H1 (cell line): ENCODE measurements at regions of chr15 and their contacts with region 1.

Region 1: DNA sequence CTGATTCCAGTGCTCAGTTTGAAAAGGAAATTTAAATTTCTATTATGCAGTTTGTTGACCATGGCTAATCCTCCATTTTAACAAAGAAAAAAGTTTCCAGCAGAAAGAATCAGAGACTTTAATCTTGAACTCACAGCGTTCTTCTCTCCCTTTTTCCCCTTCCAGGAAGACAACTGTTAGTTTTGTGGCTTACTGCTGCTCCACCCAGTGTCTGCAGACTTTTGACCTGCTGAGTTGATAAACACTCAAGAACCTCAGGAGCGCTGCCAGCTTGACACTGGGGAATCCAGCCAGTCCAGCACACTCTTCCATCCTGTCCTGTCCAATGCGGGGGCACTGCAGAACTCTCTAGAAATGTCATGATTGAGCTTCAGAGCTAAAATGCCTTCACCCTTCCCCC is 134.6 kb downstream of the LRRC28 start:
- DNase-seq: no peak
- H3K4me3 ChIP-seq: no peak overlapping the region
- H3K27ac ChIP-seq: no peak overlapping the region
- H3K4me1 ChIP-seq: peaks cover 0 to 3% (median under 1%) of the 10 kb centered on the region in 4 experiments; a peak in 4 of 7 replicates
- H3K27me3 ChIP-seq: no peaks in the 10 kb centered on the region
- CTCF ChIP-seq: no peak
- EP300 ChIP-seq: no peak
- POLR2A ChIP-seq: no peak
- RAD21 ChIP-seq: no peak

Region 2: GRCh38 chr15:99343881-99344551 is 41.8 kb before region 1 on chr15:
- CTCF ChIA-PET with region 1: interaction called, 11 read pairs
- POLR2A ChIA-PET with region 1: no interaction called
- DNase-seq: peak; percentile 21 to 65
- H3K4me3 ChIP-seq: no peak overlapping the region
- H3K27ac ChIP-seq: no peak overlapping the region
- H3K4me1 ChIP-seq: no peaks in the 10 kb centered on the region
- H3K27me3 ChIP-seq: no peaks in the 10 kb centered on the region
- CTCF ChIP-seq: peak; percentile 72 to 91 (median 91)
- EP300 ChIP-seq: no peak
- POLR2A ChIP-seq: no peak
- RAD21 ChIP-seq: peak; percentile 70 to 77

Region 3: GRCh38 chr15:99409097-99409473 is 23.2 kb after region 1 on chr15:
- CTCF ChIA-PET with region 1: interaction called, 23 read pairs
- POLR2A ChIA-PET with region 1: no interaction called
- DNase-seq: peak; percentile 49 to 58
- H3K4me3 ChIP-seq: no peak overlapping the region
- H3K27ac ChIP-seq: no peak overlapping the region
- H3K4me1 ChIP-seq: 0 out of 7 replicates have a peak, but pooled peaks cover 0 to 3% (median 0%) of the 10 kb centered on the region in 4 experiments
- H3K27me3 ChIP-seq: no peaks in the 10 kb centered on the region
- CTCF ChIP-seq: peak; percentile 69 to 80 (median 78)
- EP300 ChIP-seq: no peak
- POLR2A ChIP-seq: no peak
- RAD21 ChIP-seq: peak; percentile 85 to 88